ENCODE measurements at regions of chr1 and their contacts with region 1.

Region 1: DNA sequence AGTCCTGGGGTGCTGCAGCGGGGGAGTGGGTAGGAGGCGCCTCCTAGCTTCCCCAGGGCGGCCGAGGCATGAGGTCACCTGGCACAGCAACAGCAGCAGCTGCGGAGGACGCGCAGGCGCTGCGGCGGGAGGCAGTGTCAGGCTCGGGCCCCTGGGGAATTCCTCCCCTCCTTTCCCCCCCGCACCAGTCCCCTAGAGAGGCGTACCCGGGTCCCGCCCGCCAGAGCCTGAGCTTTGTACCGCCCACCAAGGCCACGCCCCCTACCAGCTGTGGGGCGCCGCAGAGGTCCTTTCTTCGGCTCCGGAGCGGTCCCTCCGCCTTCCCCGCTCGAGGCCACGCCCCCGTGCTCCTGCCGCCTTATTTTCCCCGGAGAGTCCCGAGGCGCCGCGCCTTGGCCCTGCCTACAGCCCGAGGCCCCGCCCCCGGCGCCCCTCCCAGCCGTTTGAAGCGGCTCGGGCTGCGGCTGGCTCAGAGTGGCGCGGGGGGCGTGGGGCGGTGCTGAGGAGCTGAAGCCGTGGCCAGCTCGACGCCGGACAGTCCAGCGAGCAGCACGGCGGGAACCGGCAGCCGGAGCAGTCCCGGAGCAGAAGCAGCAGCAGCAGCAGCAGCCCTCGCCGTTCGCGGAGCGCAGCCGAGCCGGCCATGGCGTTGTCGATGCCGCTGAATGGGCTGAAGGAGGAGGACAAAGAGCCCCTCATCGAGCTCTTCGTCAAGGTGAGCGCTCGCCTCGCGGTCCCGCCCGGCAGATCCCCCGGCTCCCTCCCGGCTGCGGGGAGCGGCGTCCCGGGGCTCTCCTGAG is at the start of gene CLIC4:
- DNase-seq: peak; percentile 96
- ATAC-seq: peak; percentile 91
- H3K4me3 ChIP-seq: peak within 1 kb of the TSS; percentile 82 to 95 (median 86)
- H3K27ac ChIP-seq: peak within 1 kb of the TSS; percentile 77
- H3K4me1 ChIP-seq: peaks cover 72% of the 10 kb centered on the region
- H3K27me3 ChIP-seq: no peaks in the 10 kb centered on the region; a peak in 1 of 5 replicates
- CTCF ChIP-seq: peak; percentile 78
- EP300 ChIP-seq: no peak
- POLR2A ChIP-seq: peak; percentile 86 to 96
- RAD21 ChIP-seq: peak; percentile 44; the same call in 1 of the 2 replicates
- total RNA-seq, gene CLIC4: 77.4 and 120 TPM in 2 replicates

Region 2: GRCh38 chr1:24688621-24689195 is 56.4 kb before region 1 on chr1:
- CTCF ChIA-PET with region 1: no interaction called
- POLR2A ChIA-PET with region 1: interaction called, 3 read pairs
- in situ Hi-C with region 1: no loop called
- intact Hi-C with region 1: loop called (anchors 5 kb)
- DNase-seq: peak; percentile 57
- ATAC-seq: peak; percentile 94
- H3K4me3 ChIP-seq: no peak overlapping the region
- H3K27ac ChIP-seq: no peak overlapping the region
- H3K4me1 ChIP-seq: peaks cover 23% of the 10 kb centered on the region
- H3K27me3 ChIP-seq: no peaks in the 10 kb centered on the region
- CTCF ChIP-seq: peak; percentile 94
- EP300 ChIP-seq: no peak
- POLR2A ChIP-seq: no peak
- RAD21 ChIP-seq: peak; percentile 87

Region 3: DNA sequence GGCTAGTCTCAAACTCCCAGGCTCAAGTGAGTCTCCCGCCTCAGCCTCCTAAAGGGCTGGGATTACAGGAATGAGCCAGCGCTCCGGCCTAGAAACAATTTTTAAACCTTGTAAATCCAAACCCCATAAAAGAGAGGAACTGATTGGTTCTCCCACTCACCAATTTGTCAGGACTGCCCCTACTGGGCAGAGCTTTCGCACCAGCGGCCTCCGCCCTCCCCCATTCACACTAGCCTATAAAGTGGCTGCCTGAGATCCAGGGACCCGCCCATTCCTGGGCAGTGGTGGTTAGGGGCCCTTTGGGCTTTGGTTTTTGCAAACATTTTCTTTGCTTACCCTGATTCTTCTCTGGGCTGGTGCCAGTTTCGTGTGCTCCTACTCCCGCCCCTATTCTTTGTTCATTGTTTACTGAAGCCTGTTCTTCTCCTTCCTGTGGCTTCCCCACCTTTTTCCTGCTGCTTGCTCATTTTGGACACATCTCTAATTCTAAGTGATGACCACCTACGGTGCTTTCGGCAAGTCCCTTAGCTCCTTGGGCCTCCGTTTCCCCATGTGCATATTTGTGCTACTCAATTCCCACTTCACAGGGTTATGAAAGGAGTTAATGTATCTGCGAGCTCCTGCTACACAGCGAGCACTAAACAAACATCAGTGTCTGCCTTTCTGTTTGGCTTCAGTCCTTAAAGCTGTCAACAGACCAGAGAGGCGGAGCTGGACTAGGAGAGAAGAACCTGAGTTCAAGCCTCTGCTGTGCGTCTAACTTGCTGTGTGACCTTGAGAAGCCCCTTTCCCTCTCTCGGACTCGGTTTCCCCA is 39.6 kb before region 1 on chr1:
- CTCF ChIA-PET with region 1: no interaction called
- POLR2A ChIA-PET with region 1: interaction called, 27 read pairs
- in situ Hi-C with region 1: no loop called
- intact Hi-C with region 1: loop called (anchors 1 kb)
- DNase-seq: peak; percentile 98
- ATAC-seq: peak; percentile 99
- H3K4me3 ChIP-seq: peak overlapping the region; percentile 31 to 47 (median 41)
- H3K27ac ChIP-seq: peak overlapping the region; percentile 79
- H3K4me1 ChIP-seq: peaks cover 62% of the 10 kb centered on the region
- H3K27me3 ChIP-seq: no peaks in the 10 kb centered on the region
- CTCF ChIP-seq: no peak
- EP300 ChIP-seq: peak in 1 of 2 experiments; percentile 44; a peak in 1 of 4 replicates
- POLR2A ChIP-seq: peak; percentile 50 to 56; a peak in 3 of 4 replicates
- RAD21 ChIP-seq: 0 out of 2 replicates have a peak, but pooled peaks have one; percentile 23

Region 4: GRCh38 chr1:24727501-24728216 is 17.5 kb before region 1 on chr1:
- CTCF ChIA-PET with region 1: no interaction called
- POLR2A ChIA-PET with region 1: interaction called, 100 read pairs
- in situ Hi-C with region 1: no loop called
- intact Hi-C with region 1: loop called (anchors 2 kb)
- DNase-seq: no peak
- ATAC-seq: no peak
- H3K4me3 ChIP-seq: peak overlapping the region; percentile 22 to 55 (median 42); a peak in 4 of 6 replicates
- H3K27ac ChIP-seq: no peak overlapping the region
- H3K4me1 ChIP-seq: peaks cover 79% of the 10 kb centered on the region
- H3K27me3 ChIP-seq: no peaks in the 10 kb centered on the region
- CTCF ChIP-seq: no peak
- EP300 ChIP-seq: no peak
- POLR2A ChIP-seq: no peak
- RAD21 ChIP-seq: no peak

Region 5: GRCh38 chr1:24768873-24769605 is 23.9 kb after region 1 on chr1:
- CTCF ChIA-PET with region 1: no interaction called
- POLR2A ChIA-PET with region 1: interaction called, 18 read pairs
- in situ Hi-C with region 1: no loop called
- intact Hi-C with region 1: no loop called
- DNase-seq: no peak
- ATAC-seq: no peak
- H3K4me3 ChIP-seq: no peak overlapping the region
- H3K27ac ChIP-seq: no peak overlapping the region
- H3K4me1 ChIP-seq: peaks cover 60% of the 10 kb centered on the region
- H3K27me3 ChIP-seq: no peaks in the 10 kb centered on the region
- CTCF ChIP-seq: no peak
- EP300 ChIP-seq: no peak
- POLR2A ChIP-seq: no peak
- RAD21 ChIP-seq: no peak

Region 6: DNA sequence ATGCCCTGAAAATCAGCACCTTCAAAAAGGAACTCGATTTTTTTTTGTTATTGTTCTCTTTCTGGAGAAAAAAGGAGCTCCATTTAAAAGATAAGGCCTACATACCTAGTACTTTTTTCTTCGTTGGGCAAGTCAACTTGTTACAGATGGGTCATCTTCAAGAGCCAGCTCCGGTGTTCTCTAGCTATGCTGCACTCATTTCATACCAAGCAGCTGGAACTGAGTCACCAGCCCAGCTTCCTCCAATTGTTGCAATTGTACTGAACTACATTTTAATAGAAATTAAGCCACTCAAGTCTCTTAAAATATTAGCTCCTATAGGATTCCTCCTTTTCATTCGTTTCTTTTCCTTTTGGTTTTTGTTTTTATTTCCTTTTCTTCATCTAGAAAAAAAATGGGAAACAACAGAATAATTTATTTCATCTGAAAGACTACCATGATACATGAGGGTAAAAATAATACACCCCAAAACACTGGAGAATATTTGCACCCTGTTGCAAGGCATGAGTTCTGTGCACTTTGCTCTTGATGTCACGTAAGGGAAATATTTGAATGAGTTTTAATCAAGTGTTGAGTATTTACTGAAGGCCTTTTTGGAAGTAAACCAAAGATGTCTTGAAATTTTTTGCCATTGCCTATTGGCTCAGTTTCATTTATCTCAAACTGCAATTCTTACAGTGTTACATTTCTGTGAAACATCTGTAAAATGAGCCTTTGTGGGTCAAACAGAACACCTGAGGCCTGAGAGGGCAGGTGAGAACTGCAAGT is 60.6 kb after region 1 on chr1:
- CTCF ChIA-PET with region 1: no interaction called
- POLR2A ChIA-PET with region 1: no interaction called
- in situ Hi-C with region 1: no loop called
- intact Hi-C with region 1: loop called (anchors 10 kb)
- DNase-seq: no peak
- ATAC-seq: no peak
- H3K4me3 ChIP-seq: no peak overlapping the region
- H3K27ac ChIP-seq: no peak overlapping the region
- H3K4me1 ChIP-seq: peaks cover 13% of the 10 kb centered on the region
- H3K27me3 ChIP-seq: no peaks in the 10 kb centered on the region
- CTCF ChIP-seq: no peak
- EP300 ChIP-seq: no peak
- POLR2A ChIP-seq: no peak
- RAD21 ChIP-seq: no peak

Region 7: GRCh38 chr1:24830680-24831272 is 85.7 kb after region 1 on chr1:
- CTCF ChIA-PET with region 1: no interaction called
- POLR2A ChIA-PET with region 1: interaction called, 8 read pairs
- in situ Hi-C with region 1: no loop called
- intact Hi-C with region 1: loop called (anchors 2 kb)
- DNase-seq: peak; percentile 62
- ATAC-seq: peak; percentile 58; the same call in 2 of the 3 replicates
- H3K4me3 ChIP-seq: no peak overlapping the region
- H3K27ac ChIP-seq: no peak overlapping the region
- H3K4me1 ChIP-seq: peaks cover 5% of the 10 kb centered on the region; the same call in 1 of the 2 replicates
- H3K27me3 ChIP-seq: no peaks in the 10 kb centered on the region
- CTCF ChIP-seq: peak; percentile 77
- EP300 ChIP-seq: no peak
- POLR2A ChIP-seq: no peak
- RAD21 ChIP-seq: peak; percentile 41; the same call in 1 of the 2 replicates

Measured in HepG2 (cell line).